Ovary (tissue), 10 donors: ENCODE measurements at regions of chr17 and their contacts with region 1.

Region 1: GRCh38 chr17:42773290-42774035 is at the start of gene VPS25:
- DNase-seq: peak; percentile 74 to 85 (median 77)
- H3K4me3 ChIP-seq: peak within 1 kb of the TSS; percentile 80
- H3K27ac ChIP-seq: peak within 1 kb of the TSS; percentile 48 to 84
- H3K4me1 ChIP-seq: peaks cover 2% of the 10 kb centered on the region
- H3K27me3 ChIP-seq: no peaks in the 10 kb centered on the region
- CTCF ChIP-seq: peak in 1 of 3 donors; percentile 19
- EP300 ChIP-seq: no peak
- POLR2A ChIP-seq: peak; percentile 75
- total RNA-seq, gene VPS25: 33.7 to 49.1 (median 35.8) TPM

Region 2: DNA sequence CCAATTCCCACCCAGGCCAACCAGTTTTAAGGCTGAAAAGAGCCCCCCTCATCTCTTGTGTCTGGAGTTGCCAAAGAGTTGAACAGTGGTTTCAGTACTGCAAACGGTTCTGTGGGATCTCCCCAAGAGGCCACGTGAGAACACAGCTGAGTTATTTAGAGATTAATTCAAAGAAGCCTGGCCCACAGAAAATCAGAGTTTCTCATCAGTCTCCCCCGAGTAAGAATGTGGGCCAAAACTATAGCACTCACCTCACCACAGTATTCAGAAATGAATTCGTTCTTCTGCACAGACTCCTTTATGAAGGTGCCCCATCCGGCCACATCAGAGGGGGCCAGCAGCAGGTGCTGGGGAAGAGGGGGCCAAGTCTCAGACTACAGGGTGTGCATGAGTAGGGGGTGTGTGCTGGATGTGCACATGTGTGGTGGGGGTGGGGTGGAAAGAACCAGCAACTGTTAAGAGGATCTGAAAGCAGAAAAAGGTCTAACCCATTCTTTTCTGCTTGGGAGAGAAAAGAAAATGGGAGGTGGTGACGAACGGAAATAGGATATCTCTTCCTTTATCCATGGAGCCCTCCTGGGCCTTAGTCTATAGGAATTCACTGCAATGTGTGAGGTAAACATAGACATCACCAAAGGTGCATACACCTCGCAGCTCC is 68.5 kb before region 1 on chr17:
- intact Hi-C with region 1: loop called in 1 of 4 experiments (anchors 10 kb)
- DNase-seq: no peak
- H3K4me3 ChIP-seq: no peak overlapping the region
- H3K27ac ChIP-seq: peak overlapping the region in 1 of 2 donors; percentile 33
- H3K4me1 ChIP-seq: no peaks in the 10 kb centered on the region
- H3K27me3 ChIP-seq: no peaks in the 10 kb centered on the region
- CTCF ChIP-seq: no peak
- EP300 ChIP-seq: no peak
- POLR2A ChIP-seq: no peak